CD4-positive, alpha-beta memory T cell (primary cell): ENCODE measurements at regions of chr19 and their contacts with region 1.

Region 1: GRCh38 chr19:6801485-6802086 is 29.1 kb downstream of the VAV1 start:
- DNase-seq: peak; percentile 82 to 86 (median 84)
- H3K4me3 ChIP-seq: peak overlapping the region; percentile 45 to 72
- H3K4me3 Mint-ChIP-seq: peak overlapping the region; percentile 83 to 96 (median 88)
- H3K27ac ChIP-seq: peak overlapping the region; percentile 78
- H3K27ac Mint-ChIP-seq: peak overlapping the region; percentile 93 to 99 (median 96)
- H3K4me1 ChIP-seq: peaks cover 54% of the 10 kb centered on the region
- H3K4me1 Mint-ChIP-seq: peaks cover 38 to 77% (median 55%) of the 10 kb centered on the region in 4 donors
- H3K27me3 ChIP-seq: no peaks in the 10 kb centered on the region
- H3K27me3 Mint-ChIP-seq: no peaks in the 10 kb centered on the region

Region 2: DNA sequence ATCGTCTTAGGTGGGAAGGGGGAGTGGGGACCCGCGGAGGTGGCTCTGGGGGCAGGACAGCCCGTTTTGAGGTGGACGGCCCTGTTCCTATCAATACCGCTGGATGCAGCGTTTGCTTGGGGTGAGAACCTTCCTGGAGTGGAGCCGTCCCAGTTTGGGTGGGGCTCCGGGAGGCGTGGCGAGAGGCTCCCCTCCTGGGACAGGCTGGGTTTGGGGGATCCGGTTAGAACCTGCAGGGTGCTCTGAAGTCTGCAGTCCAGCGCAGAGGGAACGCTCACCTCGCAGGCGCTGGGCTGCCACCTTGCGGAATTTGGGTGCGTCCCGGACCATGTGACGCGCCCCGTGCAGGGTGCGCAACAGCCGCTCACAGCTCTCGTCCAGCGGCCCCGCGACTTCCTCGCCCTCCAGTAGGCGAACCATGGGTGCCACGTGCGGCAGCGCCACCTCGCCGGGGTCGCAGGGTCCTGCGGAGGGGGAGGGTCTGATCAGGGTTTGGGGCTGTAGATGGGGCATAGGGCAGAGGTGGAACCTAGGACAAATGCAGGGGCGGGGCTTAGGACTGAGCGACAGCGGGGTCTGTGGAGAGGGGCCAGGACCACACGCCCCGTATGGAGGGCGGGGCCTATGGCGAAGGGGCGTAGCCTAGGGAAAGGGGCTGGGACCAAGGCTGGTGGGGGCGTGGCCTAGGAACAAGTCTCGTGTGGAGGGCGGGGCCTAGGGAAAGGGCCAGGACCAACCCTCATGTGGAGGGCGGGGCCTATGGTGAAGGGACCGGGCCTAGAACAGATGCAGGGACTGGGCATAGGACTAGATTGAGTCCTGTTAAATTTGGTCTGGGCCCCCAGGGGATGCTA is 48.2 kb before region 1 on chr19:
- CTCF ChIA-PET with region 1: interaction called, 4 read pairs
- POLR2A ChIA-PET with region 1: interaction called, 8 read pairs
- intact Hi-C with region 1: loop called (anchors 5 kb)
- DNase-seq: peak; percentile 71 to 77 (median 72)
- H3K4me3 ChIP-seq: peak overlapping the region in 1 of 2 donors; percentile 49
- H3K4me3 Mint-ChIP-seq: peak overlapping the region; percentile 57 to 78 (median 70)
- H3K27ac ChIP-seq: peak overlapping the region; percentile 38
- H3K27ac Mint-ChIP-seq: peak overlapping the region; percentile 77 to 93 (median 86)
- H3K4me1 ChIP-seq: no peaks in the 10 kb centered on the region
- H3K4me1 Mint-ChIP-seq: peaks cover 5 to 12% (median 8%) of the 10 kb centered on the region in 4 donors
- H3K27me3 ChIP-seq: no peaks in the 10 kb centered on the region
- H3K27me3 Mint-ChIP-seq: no peaks in the 10 kb centered on the region

Region 3: DNA sequence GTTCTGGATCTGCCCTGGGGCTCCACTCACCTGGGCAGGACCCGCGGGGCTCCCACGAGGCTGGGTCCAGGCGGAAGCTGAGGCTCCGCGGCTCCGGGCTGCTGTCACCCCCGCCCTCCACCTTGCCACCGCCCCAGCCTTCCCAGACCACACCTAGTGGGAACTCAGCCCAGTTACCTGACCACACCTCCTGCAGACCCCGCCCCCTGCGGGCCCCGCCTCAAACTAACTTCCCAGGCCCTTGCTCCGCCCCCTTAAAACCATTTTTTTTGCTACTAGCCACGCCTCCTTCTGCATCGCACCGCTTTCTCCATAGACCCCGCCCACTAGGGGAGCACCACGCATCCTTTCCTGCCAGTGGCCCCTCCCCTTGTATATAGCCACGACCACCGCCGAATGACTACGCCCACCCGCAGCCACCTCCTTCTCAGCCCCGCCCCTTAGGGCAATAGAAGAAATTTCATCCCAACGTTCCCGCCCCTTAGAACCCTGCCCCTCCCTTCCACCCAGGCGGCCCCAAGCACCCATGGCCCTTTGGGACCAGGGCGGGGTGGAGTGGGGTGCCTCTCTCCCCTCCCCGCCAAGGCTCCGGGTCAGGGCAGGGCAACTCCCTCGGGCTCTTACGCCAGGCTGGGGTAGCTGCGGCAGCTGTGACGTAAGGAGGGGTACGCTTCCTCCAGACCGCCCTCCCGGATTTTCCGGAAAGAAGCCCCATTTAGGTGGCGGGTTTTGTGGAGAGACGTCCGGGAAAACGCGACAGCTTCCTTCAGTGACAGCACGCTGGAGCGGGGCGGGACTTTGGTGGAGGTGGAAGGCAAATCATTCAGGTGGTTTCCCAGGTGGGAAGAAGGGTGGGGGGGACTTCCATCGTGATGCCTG is 34.0 kb before region 1 on chr19 and contains the start of gene SH2D3A:
- CTCF ChIA-PET with region 1: interaction called, 15 read pairs
- POLR2A ChIA-PET with region 1: interaction called, 227 read pairs
- intact Hi-C with region 1: loop called (anchors 1 kb)
- DNase-seq: peak; percentile 96 to 99 (median 96)
- H3K4me3 ChIP-seq: peak within 1 kb of the TSS; percentile 63 to 80
- H3K4me3 Mint-ChIP-seq: peak within 1 kb of the TSS; percentile 91 to 98 (median 94)
- H3K27ac ChIP-seq: peak within 1 kb of the TSS; percentile 97
- H3K27ac Mint-ChIP-seq: peak within 1 kb of the TSS; percentile 89 to 99 (median 96)
- H3K4me1 ChIP-seq: peaks cover 54% of the 10 kb centered on the region
- H3K4me1 Mint-ChIP-seq: peaks cover 31 to 67% (median 44%) of the 10 kb centered on the region in 4 donors
- H3K27me3 ChIP-seq: no peaks in the 10 kb centered on the region
- H3K27me3 Mint-ChIP-seq: no peaks in the 10 kb centered on the region
- total RNA-seq, gene SH2D3A: 59.3 to 64.3 TPM

Region 4: DNA sequence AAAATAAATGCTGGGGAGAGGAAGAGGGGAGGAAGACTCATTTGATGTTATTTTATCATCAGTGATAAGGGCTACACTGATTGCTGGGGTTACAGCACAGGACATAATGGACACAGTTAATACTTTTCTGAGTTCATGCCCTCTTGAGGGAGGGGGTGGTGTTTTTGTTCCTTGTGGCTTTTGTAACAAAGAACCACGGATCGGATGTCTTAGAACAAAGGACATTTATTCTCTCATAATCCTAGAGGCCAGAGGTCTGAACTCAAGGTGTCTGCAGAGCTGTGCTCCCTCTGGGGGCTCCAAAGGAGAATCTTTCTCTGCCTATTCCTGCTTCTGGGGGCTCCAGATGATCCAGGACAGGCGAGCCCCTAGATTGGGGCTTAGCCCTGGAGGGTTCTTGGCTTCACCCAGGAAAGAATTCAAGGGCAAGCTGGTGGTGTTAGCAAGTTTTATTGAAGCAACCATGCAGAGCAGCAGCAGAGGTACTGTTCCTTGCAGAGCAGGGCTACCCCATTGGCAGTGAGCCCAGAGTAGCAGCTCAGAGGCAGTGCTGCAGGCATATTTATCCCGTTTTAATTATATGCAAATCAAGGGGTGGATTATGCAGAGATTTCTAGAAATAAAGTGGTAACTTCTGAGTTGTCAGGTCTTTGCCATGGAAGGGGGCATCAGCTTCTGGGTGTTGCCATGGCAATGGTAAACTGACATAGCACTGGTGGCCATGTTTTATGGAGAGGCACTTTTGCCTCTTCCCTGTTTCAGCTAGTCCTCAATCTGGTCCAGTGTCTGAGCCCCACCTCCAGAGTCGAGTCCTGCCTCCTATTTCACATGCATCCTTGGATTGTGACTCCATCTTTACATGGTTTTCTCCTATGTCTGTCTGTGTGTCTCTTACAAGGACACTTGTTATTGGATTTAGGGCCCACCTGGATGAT is 11.1 kb before region 1 on chr19:
- CTCF ChIA-PET with region 1: interaction called, 6 read pairs
- POLR2A ChIA-PET with region 1: interaction called, 28 read pairs
- intact Hi-C with region 1: loop called (anchors 1 kb)
- DNase-seq: no peak
- H3K4me3 ChIP-seq: no peak overlapping the region
- H3K4me3 Mint-ChIP-seq: peak overlapping the region in 5 of 8 donors; percentile 8 to 69 (median 49)
- H3K27ac ChIP-seq: no peak overlapping the region
- H3K27ac Mint-ChIP-seq: peak overlapping the region; percentile 68 to 88 (median 77)
- H3K4me1 ChIP-seq: peaks cover 50% of the 10 kb centered on the region
- H3K4me1 Mint-ChIP-seq: peaks cover 40 to 80% (median 56%) of the 10 kb centered on the region in 4 donors
- H3K27me3 ChIP-seq: no peaks in the 10 kb centered on the region
- H3K27me3 Mint-ChIP-seq: no peaks in the 10 kb centered on the region

Region 5: DNA sequence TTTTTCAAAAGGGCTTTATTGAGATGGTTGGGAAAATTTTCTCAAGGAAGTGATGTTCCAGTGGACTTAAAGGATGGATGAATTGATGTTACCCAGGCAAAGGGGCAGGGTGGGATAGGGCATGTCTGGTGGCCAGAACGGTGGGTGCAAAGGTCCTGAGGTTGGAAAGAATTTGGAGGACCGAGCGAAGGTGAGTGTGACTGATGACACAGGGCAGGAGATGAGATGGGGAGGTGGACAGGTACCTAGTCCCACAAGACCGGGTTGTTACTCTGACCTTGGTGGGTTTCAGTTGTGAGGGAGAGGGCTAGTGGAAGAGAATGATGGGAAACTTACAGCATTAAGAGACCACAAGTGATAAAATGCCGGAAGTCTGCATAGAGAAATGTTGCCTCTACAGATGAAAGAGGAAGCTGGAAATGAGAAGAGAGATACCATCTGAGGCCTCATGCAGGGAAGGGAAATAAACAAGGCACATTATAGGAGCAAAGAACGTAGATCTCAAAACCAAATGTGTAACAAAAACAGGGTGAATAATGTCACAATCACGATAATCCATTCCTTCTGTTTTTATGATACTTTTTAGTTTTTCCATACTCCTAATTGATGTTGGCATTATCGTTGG is 90.3 kb after region 1 on chr19:
- CTCF ChIA-PET with region 1: no interaction called
- POLR2A ChIA-PET with region 1: interaction called, 16 read pairs
- intact Hi-C with region 1: no loop called
- DNase-seq: peak in 4 of 5 donors; percentile 26 to 48 (median 29)
- H3K4me3 ChIP-seq: no peak overlapping the region
- H3K4me3 Mint-ChIP-seq: peak overlapping the region; percentile 67 to 80 (median 74)
- H3K27ac ChIP-seq: peak overlapping the region; percentile 3
- H3K27ac Mint-ChIP-seq: peak overlapping the region; percentile 78 to 95 (median 90)
- H3K4me1 ChIP-seq: peaks cover 68% of the 10 kb centered on the region
- H3K4me1 Mint-ChIP-seq: peaks cover 64 to 95% (median 75%) of the 10 kb centered on the region in 4 donors
- H3K27me3 ChIP-seq: no peaks in the 10 kb centered on the region
- H3K27me3 Mint-ChIP-seq: no peaks in the 10 kb centered on the region